Heart left ventricle (tissue), 16 donors: ENCODE measurements at regions of chr7 and their contacts with region 1.

Region 1: GRCh38 chr7:35993676-35994606 is 159.1 kb upstream of the EEPD1 start:
- DNase-seq: no peak
- ATAC-seq: peak in 2 of 4 donors; percentile 48 to 50
- H3K4me3 ChIP-seq: no peak overlapping the region
- H3K27ac ChIP-seq: peak overlapping the region in 2 of 12 donors; percentile 13 to 17
- H3K4me1 ChIP-seq: peaks cover 0 to 12% (median 2%) of the 10 kb centered on the region in 12 donors
- H3K27me3 ChIP-seq: no peaks in the 10 kb centered on the region
- CTCF ChIP-seq: no peak
- POLR2A ChIP-seq: no peak

Region 2: DNA sequence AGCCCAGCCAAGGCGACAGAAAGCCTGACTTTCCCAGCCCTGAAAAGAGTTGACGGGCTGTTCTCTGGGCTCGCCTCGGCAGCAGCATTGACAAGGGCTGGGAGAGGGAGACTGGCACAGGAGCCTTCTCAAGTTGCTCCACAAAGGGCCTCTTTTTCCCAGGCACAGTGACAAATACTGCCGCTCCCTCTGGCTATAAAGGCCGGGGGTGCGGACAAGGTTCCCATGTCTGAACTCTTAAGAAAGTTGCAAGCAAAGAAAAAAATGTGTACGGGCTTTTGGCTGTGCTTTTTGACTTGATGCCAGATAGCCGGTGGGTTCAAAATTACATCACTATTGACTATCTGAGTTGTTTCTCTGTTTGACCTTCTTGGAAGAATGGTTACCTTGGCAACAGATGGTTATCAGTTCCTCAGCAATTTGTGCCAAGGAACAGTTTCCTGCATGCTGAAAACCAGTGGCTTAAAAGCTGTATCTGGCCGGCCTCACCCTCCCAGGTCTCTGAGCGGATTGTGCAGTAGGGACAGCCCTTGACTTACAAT is 43.3 kb after region 1 on chr7:
- intact Hi-C with region 1: loop called in 4 of 10 experiments (anchors 2 to 5 kb)
- DNase-seq: peak in 4 of 5 donors; percentile 58 to 73 (median 70)
- ATAC-seq: peak; percentile 74 to 87 (median 79)
- H3K4me3 ChIP-seq: peak overlapping the region in 1 of 12 donors; percentile 36
- H3K27ac ChIP-seq: peak overlapping the region; percentile 56 to 94 (median 84)
- H3K4me1 ChIP-seq: peaks cover 0 to 53% (median 35%) of the 10 kb centered on the region in 12 donors
- H3K27me3 ChIP-seq: no peaks in the 10 kb centered on the region
- CTCF ChIP-seq: peak in 1 of 12 donors; percentile 20
- POLR2A ChIP-seq: no peak

Region 3: DNA sequence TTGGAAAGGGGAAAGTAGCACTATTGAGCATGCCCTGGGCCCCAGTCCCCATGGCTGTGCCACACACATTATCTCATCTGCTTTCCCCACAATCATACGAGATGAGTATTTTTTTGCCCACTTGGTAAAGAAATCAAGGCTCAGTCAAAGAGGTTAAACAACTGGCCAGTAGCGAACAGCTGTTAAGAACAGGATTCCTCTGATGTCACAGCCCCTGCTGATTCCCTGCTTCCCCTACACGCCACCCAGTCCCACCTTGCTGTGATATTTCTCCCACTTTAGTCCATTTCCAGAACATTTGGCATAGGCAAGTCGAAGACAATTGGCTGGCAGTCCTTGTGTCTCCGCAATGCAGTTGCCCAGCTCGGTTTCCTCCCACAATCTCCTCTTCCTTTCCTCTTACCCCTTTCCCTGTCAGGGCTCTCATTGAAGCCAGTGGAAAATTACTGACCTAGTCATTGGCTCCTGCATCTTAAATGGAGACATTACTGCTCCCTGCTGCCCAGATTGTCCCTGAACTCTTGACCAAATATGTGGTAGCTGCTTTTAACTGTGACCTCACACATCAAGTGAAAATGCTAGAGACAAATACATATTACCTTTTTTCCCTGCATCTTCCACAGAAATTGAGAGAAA is 102.6 kb after region 1 on chr7:
- intact Hi-C with region 1: loop called in 8 of 10 experiments (anchors 5 to 10 kb)
- DNase-seq: no peak
- ATAC-seq: peak in 2 of 4 donors; percentile 59 to 85
- H3K4me3 ChIP-seq: no peak overlapping the region
- H3K27ac ChIP-seq: no peak overlapping the region
- H3K4me1 ChIP-seq: peaks cover 0 to 18% (median 5%) of the 10 kb centered on the region in 12 donors
- H3K27me3 ChIP-seq: no peaks in the 10 kb centered on the region
- CTCF ChIP-seq: peak in 7 of 12 donors; percentile 17 to 44 (median 31)
- POLR2A ChIP-seq: no peak

Region 4: GRCh38 chr7:36115448-36116321 is 121.7 kb after region 1 on chr7:
- intact Hi-C with region 1: loop called in 1 of 10 experiments (anchors 5 kb)
- DNase-seq: peak; percentile 49 to 86 (median 63)
- ATAC-seq: peak; percentile 47 to 83 (median 62)
- H3K4me3 ChIP-seq: no peak overlapping the region
- H3K27ac ChIP-seq: peak overlapping the region in 8 of 12 donors; percentile 3 to 60 (median 48)
- H3K4me1 ChIP-seq: peaks cover 0 to 55% (median 28%) of the 10 kb centered on the region in 12 donors
- H3K27me3 ChIP-seq: no peaks in the 10 kb centered on the region
- CTCF ChIP-seq: no peak
- POLR2A ChIP-seq: no peak